ENCODE measurements at regions of chr21 and their contacts with region 1.

Region 1: DNA sequence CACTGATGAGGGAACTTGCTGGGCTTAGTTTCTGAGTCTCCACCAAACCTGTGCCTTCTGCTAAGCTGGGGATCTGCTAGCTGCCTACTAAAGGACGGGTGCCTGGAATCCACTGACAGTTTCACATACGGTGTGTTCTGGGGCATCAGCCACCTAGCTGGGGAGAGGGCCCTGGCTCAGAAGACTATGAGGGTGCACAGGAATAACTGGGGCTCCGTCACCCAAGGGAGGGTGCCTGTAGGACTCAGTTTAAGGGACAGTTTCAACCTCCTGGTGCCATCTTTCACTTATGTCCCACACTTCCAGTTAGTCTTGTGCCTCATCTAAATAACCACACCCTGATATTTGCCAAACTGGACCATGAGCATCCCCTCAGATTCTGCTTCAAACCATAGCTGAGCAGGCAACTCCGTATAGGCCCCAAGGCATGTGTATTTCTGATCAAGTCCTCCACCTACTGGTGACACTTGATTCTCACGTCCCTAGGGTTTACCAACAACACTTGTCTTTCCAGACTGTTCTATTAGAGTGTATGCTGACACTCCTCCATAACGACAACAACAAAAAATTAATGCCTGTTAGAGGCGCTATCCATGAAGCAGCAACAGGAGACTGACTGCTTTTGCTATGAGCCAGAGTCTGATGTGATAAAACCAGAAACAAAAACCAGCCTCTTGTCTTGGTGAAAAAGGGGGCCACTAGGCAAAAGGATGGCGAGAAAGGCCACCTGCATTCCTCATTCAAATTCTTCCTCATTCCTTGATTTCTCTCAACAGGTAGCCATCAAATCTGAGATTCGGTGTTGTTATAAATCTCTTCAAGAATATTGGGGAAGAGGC is 55.0 kb upstream of the PAXBP1 start:
- DNase-seq: peak in 4 of 5 donors; percentile 23 to 38 (median 29)
- H3K4me3 ChIP-seq: no peak overlapping the region
- H3K4me3 Mint-ChIP-seq: no peak overlapping the region
- H3K27ac ChIP-seq: no peak overlapping the region
- H3K27ac Mint-ChIP-seq: no peak overlapping the region
- H3K4me1 ChIP-seq: no peaks in the 10 kb centered on the region
- H3K4me1 Mint-ChIP-seq: no peaks in the 10 kb centered on the region
- H3K27me3 ChIP-seq: no peaks in the 10 kb centered on the region
- H3K27me3 Mint-ChIP-seq: peaks cover 3% of the 10 kb centered on the region in 2 donors

Region 2: GRCh38 chr21:32653311-32653901 is 173.1 kb before region 1 on chr21:
- CTCF ChIA-PET with region 1: interaction called, 22 read pairs
- POLR2A ChIA-PET with region 1: no interaction called
- intact Hi-C with region 1: no loop called
- DNase-seq: peak in 4 of 5 donors; percentile 10 to 33 (median 31)
- H3K4me3 ChIP-seq: no peak overlapping the region
- H3K4me3 Mint-ChIP-seq: no peak overlapping the region
- H3K27ac ChIP-seq: no peak overlapping the region
- H3K27ac Mint-ChIP-seq: peak overlapping the region in 1 of 7 donors; percentile 51
- H3K4me1 ChIP-seq: no peaks in the 10 kb centered on the region
- H3K4me1 Mint-ChIP-seq: peaks cover 0 to 1% (median 0%) of the 10 kb centered on the region in 4 donors
- H3K27me3 ChIP-seq: no peaks in the 10 kb centered on the region
- H3K27me3 Mint-ChIP-seq: no peaks in the 10 kb centered on the region

Region 3: GRCh38 chr21:32687643-32688345 is 138.8 kb before region 1 on chr21:
- CTCF ChIA-PET with region 1: interaction called, 3 read pairs
- POLR2A ChIA-PET with region 1: no interaction called
- intact Hi-C with region 1: loop called (anchors 1 kb)
- DNase-seq: no peak
- H3K4me3 ChIP-seq: no peak overlapping the region
- H3K4me3 Mint-ChIP-seq: no peak overlapping the region
- H3K27ac ChIP-seq: no peak overlapping the region
- H3K27ac Mint-ChIP-seq: peak overlapping the region in 1 of 7 donors; percentile 8
- H3K4me1 ChIP-seq: no peaks in the 10 kb centered on the region
- H3K4me1 Mint-ChIP-seq: peaks cover 0 to 1% (median 0%) of the 10 kb centered on the region in 4 donors
- H3K27me3 ChIP-seq: no peaks in the 10 kb centered on the region
- H3K27me3 Mint-ChIP-seq: no peaks in the 10 kb centered on the region

Region 4: GRCh38 chr21:32978341-32979270 is 152.1 kb after region 1 on chr21:
- CTCF ChIA-PET with region 1: no interaction called
- POLR2A ChIA-PET with region 1: no interaction called
- intact Hi-C with region 1: no loop called
- DNase-seq: no peak
- H3K4me3 ChIP-seq: no peak overlapping the region
- H3K4me3 Mint-ChIP-seq: no peak overlapping the region
- H3K27ac ChIP-seq: no peak overlapping the region
- H3K27ac Mint-ChIP-seq: no peak overlapping the region
- H3K4me1 ChIP-seq: no peaks in the 10 kb centered on the region
- H3K4me1 Mint-ChIP-seq: no peaks in the 10 kb centered on the region
- H3K27me3 ChIP-seq: no peaks in the 10 kb centered on the region
- H3K27me3 Mint-ChIP-seq: peaks cover 15 to 24% of the 10 kb centered on the region in 2 donors

Measured in CD4-positive, alpha-beta memory T cell (primary cell).